Naive thymus-derived CD4-positive, alpha-beta T cell (primary cell): ENCODE measurements at regions of chr10 and their contacts with region 1.

Region 1: DNA sequence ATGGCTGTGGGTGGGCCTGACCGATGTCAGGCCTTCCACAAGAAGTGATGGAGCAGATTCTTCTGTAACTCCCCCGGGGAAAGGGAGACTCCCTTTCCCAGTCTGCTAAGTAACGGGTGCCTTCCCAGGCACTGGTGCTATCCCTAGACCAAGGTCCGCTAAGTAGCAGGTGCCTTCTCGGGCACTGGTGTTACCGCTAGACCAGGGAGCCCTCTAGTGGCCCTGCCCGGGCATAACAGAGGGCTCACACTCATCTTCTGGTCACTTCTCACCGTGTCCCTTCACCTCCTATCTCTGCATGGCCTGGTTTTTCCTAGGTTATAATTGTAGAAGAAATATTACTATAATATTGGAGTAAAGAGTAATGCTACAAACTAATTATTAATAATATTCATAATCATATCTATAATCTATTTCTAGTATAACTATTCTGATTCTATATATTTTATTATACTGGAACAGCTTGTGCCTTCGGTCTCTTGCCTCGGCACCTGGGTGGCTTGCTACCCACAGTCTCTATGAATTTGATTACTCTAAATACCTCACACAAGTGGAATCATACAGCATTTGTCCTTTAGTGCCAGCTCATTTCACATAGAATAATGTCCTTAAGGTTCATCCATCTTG is 1378.7 kb downstream of the XPNPEP1 start:
- DNase-seq: peak in 2 of 9 donors; percentile 9 to 40
- ATAC-seq: no peak
- H3K4me3 ChIP-seq: no peak overlapping the region
- H3K4me3 Mint-ChIP-seq: no peak overlapping the region
- H3K27ac ChIP-seq: no peak overlapping the region
- H3K27ac Mint-ChIP-seq: no peak overlapping the region
- H3K4me1 ChIP-seq: no peaks in the 10 kb centered on the region
- H3K4me1 Mint-ChIP-seq: no peaks in the 10 kb centered on the region
- H3K27me3 ChIP-seq: no peaks in the 10 kb centered on the region
- H3K27me3 Mint-ChIP-seq: no peaks in the 10 kb centered on the region

Region 2: DNA sequence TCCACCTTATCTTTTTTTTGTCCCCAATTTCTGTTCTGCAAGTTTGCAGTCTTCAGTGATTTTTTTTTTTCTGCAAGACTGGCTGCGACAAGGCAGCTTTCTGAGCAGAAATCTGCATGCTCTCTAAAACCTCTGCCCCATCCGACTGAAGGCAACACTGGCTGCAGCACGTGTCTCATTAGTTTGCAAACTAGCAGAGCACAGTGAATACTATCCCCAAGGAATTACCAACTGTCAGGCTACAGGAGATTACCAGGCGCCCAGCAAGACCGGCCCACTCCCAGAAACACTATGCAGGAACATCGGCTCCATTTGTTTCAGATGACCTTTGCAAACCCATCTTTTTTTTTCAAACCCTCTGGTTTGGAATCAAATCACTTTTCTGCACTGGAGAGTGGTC is 1918.9 kb before region 1 on chr10:
- CTCF ChIA-PET with region 1: no interaction called
- POLR2A ChIA-PET with region 1: no interaction called
- intact Hi-C with region 1: loop called in 1 of 2 experiments (anchors 2 kb)
- DNase-seq: no peak
- ATAC-seq: no peak
- H3K4me3 ChIP-seq: no peak overlapping the region
- H3K4me3 Mint-ChIP-seq: no peak overlapping the region
- H3K27ac ChIP-seq: no peak overlapping the region
- H3K27ac Mint-ChIP-seq: no peak overlapping the region
- H3K4me1 ChIP-seq: no peaks in the 10 kb centered on the region
- H3K4me1 Mint-ChIP-seq: no peaks in the 10 kb centered on the region
- H3K27me3 ChIP-seq: no peaks in the 10 kb centered on the region
- H3K27me3 Mint-ChIP-seq: peaks cover 0 to 10% (median 0%) of the 10 kb centered on the region in 5 donors

Region 3: DNA sequence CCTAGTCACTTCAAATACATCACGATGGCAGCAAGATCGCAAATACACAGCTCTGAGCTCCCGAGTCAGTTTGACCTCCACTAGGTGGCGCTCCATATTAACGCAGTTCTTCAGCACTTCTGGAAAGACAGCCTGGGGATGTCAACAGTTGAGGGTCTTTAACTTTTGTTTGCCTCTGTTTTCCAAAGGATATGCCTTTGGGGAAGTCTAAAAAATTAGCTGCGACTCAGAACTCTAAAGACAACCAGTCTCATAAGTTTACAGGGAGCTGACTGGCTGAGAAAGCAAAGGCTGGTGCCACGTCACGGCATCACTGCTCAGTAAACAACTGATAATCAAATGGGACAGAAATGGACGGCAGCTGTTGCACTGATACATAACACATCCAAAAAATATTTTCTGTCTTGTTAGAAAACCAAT is 1838.9 kb before region 1 on chr10:
- CTCF ChIA-PET with region 1: no interaction called
- POLR2A ChIA-PET with region 1: no interaction called
- intact Hi-C with region 1: loop called in 1 of 2 experiments (anchors 2 kb)
- DNase-seq: peak in 1 of 9 donors; percentile 28
- ATAC-seq: no peak
- H3K4me3 ChIP-seq: no peak overlapping the region
- H3K4me3 Mint-ChIP-seq: no peak overlapping the region
- H3K27ac ChIP-seq: no peak overlapping the region
- H3K27ac Mint-ChIP-seq: no peak overlapping the region
- H3K4me1 ChIP-seq: no peaks in the 10 kb centered on the region
- H3K4me1 Mint-ChIP-seq: peaks cover 0 to 3% (median 0%) of the 10 kb centered on the region in 7 donors
- H3K27me3 ChIP-seq: no peaks in the 10 kb centered on the region
- H3K27me3 Mint-ChIP-seq: peaks cover 0 to 13% (median under 1%) of the 10 kb centered on the region in 5 donors

Region 4: GRCh38 chr10:108521762-108522492 is 22.7 kb before region 1 on chr10:
- CTCF ChIA-PET with region 1: no interaction called
- POLR2A ChIA-PET with region 1: no interaction called
- intact Hi-C with region 1: no loop called
- DNase-seq: no peak
- ATAC-seq: no peak
- H3K4me3 ChIP-seq: no peak overlapping the region
- H3K4me3 Mint-ChIP-seq: no peak overlapping the region
- H3K27ac ChIP-seq: no peak overlapping the region
- H3K27ac Mint-ChIP-seq: no peak overlapping the region
- H3K4me1 ChIP-seq: no peaks in the 10 kb centered on the region
- H3K4me1 Mint-ChIP-seq: no peaks in the 10 kb centered on the region
- H3K27me3 ChIP-seq: no peaks in the 10 kb centered on the region
- H3K27me3 Mint-ChIP-seq: no peaks in the 10 kb centered on the region

Region 5: GRCh38 chr10:108688314-108688713 is 143.7 kb after region 1 on chr10:
- CTCF ChIA-PET with region 1: no interaction called
- POLR2A ChIA-PET with region 1: no interaction called
- intact Hi-C with region 1: no loop called
- DNase-seq: no peak
- ATAC-seq: no peak
- H3K4me3 ChIP-seq: no peak overlapping the region
- H3K4me3 Mint-ChIP-seq: no peak overlapping the region
- H3K27ac ChIP-seq: no peak overlapping the region
- H3K27ac Mint-ChIP-seq: no peak overlapping the region
- H3K4me1 ChIP-seq: no peaks in the 10 kb centered on the region
- H3K4me1 Mint-ChIP-seq: no peaks in the 10 kb centered on the region
- H3K27me3 ChIP-seq: no peaks in the 10 kb centered on the region
- H3K27me3 Mint-ChIP-seq: no peaks in the 10 kb centered on the region